Dendritic cell treated with granulocyte-macrophage colony-stimulating factor and Interleukin-4, amounts not matched to agents 40 ng/mL and 50 ng/mL, for 4 days (primary cell): ENCODE measurements at regions of chr11 and their contacts with region 1.

Region 1: GRCh38 chr11:102914238-102915043 is 39.7 kb upstream of the MMP12 start:
- H3K4me3 Mint-ChIP-seq: no peak overlapping the region
- H3K27ac Mint-ChIP-seq: peak overlapping the region; percentile 37
- H3K4me1 Mint-ChIP-seq: peaks cover 22% of the 10 kb centered on the region
- H3K27me3 Mint-ChIP-seq: peaks cover 48% of the 10 kb centered on the region

Region 2: GRCh38 chr11:102733232-102733875 is 181.1 kb before region 1 on chr11:
- intact Hi-C with region 1: loop called (anchors 10 kb)
- H3K4me3 Mint-ChIP-seq: no peak overlapping the region
- H3K27ac Mint-ChIP-seq: no peak overlapping the region
- H3K4me1 Mint-ChIP-seq: peaks cover 16% of the 10 kb centered on the region
- H3K27me3 Mint-ChIP-seq: peaks cover 37% of the 10 kb centered on the region

Region 3: GRCh38 chr11:102831489-102832440 is 82.7 kb before region 1 on chr11:
- intact Hi-C with region 1: loop called (anchors 5 kb)
- H3K4me3 Mint-ChIP-seq: peak overlapping the region; percentile 64
- H3K27ac Mint-ChIP-seq: peak overlapping the region; percentile 37
- H3K4me1 Mint-ChIP-seq: peaks cover 11% of the 10 kb centered on the region
- H3K27me3 Mint-ChIP-seq: peaks cover 51% of the 10 kb centered on the region

Region 4: GRCh38 chr11:102850973-102851745 is 63.3 kb before region 1 on chr11:
- intact Hi-C with region 1: no loop called
- H3K4me3 Mint-ChIP-seq: no peak overlapping the region
- H3K27ac Mint-ChIP-seq: no peak overlapping the region
- H3K4me1 Mint-ChIP-seq: no peaks in the 10 kb centered on the region
- H3K27me3 Mint-ChIP-seq: peaks cover 17% of the 10 kb centered on the region